ENCODE measurements at regions of chr17 and their contacts with region 1.

Region 1: GRCh38 chr17:48944519-48945260 is at the start of gene SNF8:
- DNase-seq: peak; percentile 81 to 94 (median 90)
- ATAC-seq: peak; percentile 93
- H3K4me3 ChIP-seq: peak within 1 kb of the TSS; percentile 99
- H3K4me3 Mint-ChIP-seq: peak within 1 kb of the TSS; percentile 99
- H3K27ac ChIP-seq: peak within 1 kb of the TSS; percentile 81 to 85
- H3K27ac Mint-ChIP-seq: peak within 1 kb of the TSS; percentile 95
- H3K4me1 ChIP-seq: peaks cover 31% of the 10 kb centered on the region
- H3K4me1 Mint-ChIP-seq: peaks cover 14% of the 10 kb centered on the region
- H3K27me3 ChIP-seq: no peaks in the 10 kb centered on the region
- H3K27me3 Mint-ChIP-seq: no peaks in the 10 kb centered on the region
- CTCF ChIP-seq: no peak
- total RNA-seq, gene SNF8: 53.8 to 57.4 TPM

Region 2: GRCh38 chr17:48908047-48908843 is 36.4 kb before region 1 on chr17 and contains the start of gene UBE2Z:
- CTCF ChIA-PET with region 1: interaction called, 3 read pairs
- POLR2A ChIA-PET with region 1: interaction called, 23 read pairs
- intact Hi-C with region 1: loop called in 1 of 2 experiments (anchors 2 kb)
- DNase-seq: peak; percentile 81 to 97 (median 90)
- ATAC-seq: peak; percentile 88
- H3K4me3 ChIP-seq: peak within 1 kb of the TSS; percentile 59
- H3K4me3 Mint-ChIP-seq: peak within 1 kb of the TSS; percentile 95
- H3K27ac ChIP-seq: peak within 1 kb of the TSS; percentile 83 to 86
- H3K27ac Mint-ChIP-seq: peak within 1 kb of the TSS; percentile 99
- H3K4me1 ChIP-seq: peaks cover 36% of the 10 kb centered on the region
- H3K4me1 Mint-ChIP-seq: peaks cover 53% of the 10 kb centered on the region
- H3K27me3 ChIP-seq: no peaks in the 10 kb centered on the region
- H3K27me3 Mint-ChIP-seq: no peaks in the 10 kb centered on the region
- CTCF ChIP-seq: no peak
- total RNA-seq, gene UBE2Z: 60.5 to 61.6 TPM

Region 3: GRCh38 chr17:48997083-48997826 is 52.6 kb after region 1 on chr17 and contains the start of gene IGF2BP1:
- CTCF ChIA-PET with region 1: no interaction called
- POLR2A ChIA-PET with region 1: interaction called, 4 read pairs
- intact Hi-C with region 1: loop called in 1 of 2 experiments (anchors 10 kb)
- DNase-seq: peak in 3 of 14 experiments; percentile 26 to 48 (median 47)
- ATAC-seq: peak; percentile 38
- H3K4me3 ChIP-seq: peak within 1 kb of the TSS; percentile 24
- H3K4me3 Mint-ChIP-seq: peak within 1 kb of the TSS; percentile 72
- H3K27ac ChIP-seq: no peak within 1 kb of the TSS
- H3K27ac Mint-ChIP-seq: no peak within 1 kb of the TSS
- H3K4me1 ChIP-seq: peaks cover 36% of the 10 kb centered on the region
- H3K4me1 Mint-ChIP-seq: peaks cover 35% of the 10 kb centered on the region
- H3K27me3 ChIP-seq: peaks cover 60 to 96% of the 10 kb centered on the region in 2 experiments
- H3K27me3 Mint-ChIP-seq: peaks cover 92% of the 10 kb centered on the region
- CTCF ChIP-seq: no peak
- total RNA-seq, gene IGF2BP1: not detected

Region 4: DNA sequence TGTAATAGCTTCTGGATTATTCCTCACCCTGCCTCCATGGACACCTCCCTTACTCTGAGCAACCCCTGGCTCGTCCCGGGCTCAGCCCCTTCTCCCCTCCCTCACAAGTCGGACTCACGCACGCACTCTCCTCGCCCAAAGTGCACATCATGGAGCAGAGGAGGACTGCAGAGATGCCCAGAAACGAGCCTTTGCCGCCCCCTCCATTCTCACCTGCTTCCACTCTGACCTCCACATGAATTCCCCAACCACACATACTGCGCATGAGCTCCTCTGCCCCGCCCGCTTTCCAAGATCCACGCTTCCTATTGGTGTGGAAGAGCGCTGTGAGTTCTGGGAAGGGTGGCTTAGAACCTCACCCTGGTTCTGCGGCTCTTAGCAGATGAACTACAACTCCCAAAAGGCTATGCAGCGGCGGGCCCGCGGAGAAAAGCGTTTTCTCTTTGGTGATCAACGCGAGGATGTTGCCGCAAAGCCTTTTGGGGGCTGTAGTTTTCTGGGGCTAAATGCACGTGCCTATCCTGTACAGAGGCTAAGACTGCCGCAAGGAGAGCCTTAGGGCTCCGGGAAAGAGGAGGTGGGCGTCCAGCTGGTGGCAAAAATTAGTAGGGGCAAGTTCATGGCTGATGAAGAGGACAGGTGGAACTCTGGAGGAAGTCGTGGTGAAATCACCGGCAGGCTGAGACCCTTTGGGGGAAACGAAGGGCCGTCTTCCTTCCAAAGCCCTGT is 470.1 kb after region 1 on chr17 and contains the start of gene PHB1:
- CTCF ChIA-PET with region 1: no interaction called
- POLR2A ChIA-PET with region 1: no interaction called
- intact Hi-C with region 1: loop called in 1 of 2 experiments (anchors 10 kb)
- DNase-seq: peak; percentile 88 to 99 (median 92)
- ATAC-seq: peak; percentile 98
- H3K4me3 ChIP-seq: peak within 1 kb of the TSS; percentile 87
- H3K4me3 Mint-ChIP-seq: peak within 1 kb of the TSS; percentile 91
- H3K27ac ChIP-seq: peak within 1 kb of the TSS in 1 of 2 donors; percentile 30
- H3K27ac Mint-ChIP-seq: peak within 1 kb of the TSS; percentile 52
- H3K4me1 ChIP-seq: peaks cover 19% of the 10 kb centered on the region
- H3K4me1 Mint-ChIP-seq: peaks cover 16% of the 10 kb centered on the region
- H3K27me3 ChIP-seq: no peaks in the 10 kb centered on the region
- H3K27me3 Mint-ChIP-seq: no peaks in the 10 kb centered on the region
- CTCF ChIP-seq: no peak
- total RNA-seq, gene PHB1: 24.2 to 31.6 TPM